ENCODE measurements at regions of chr7 and their contacts with region 1.

Region 1: DNA sequence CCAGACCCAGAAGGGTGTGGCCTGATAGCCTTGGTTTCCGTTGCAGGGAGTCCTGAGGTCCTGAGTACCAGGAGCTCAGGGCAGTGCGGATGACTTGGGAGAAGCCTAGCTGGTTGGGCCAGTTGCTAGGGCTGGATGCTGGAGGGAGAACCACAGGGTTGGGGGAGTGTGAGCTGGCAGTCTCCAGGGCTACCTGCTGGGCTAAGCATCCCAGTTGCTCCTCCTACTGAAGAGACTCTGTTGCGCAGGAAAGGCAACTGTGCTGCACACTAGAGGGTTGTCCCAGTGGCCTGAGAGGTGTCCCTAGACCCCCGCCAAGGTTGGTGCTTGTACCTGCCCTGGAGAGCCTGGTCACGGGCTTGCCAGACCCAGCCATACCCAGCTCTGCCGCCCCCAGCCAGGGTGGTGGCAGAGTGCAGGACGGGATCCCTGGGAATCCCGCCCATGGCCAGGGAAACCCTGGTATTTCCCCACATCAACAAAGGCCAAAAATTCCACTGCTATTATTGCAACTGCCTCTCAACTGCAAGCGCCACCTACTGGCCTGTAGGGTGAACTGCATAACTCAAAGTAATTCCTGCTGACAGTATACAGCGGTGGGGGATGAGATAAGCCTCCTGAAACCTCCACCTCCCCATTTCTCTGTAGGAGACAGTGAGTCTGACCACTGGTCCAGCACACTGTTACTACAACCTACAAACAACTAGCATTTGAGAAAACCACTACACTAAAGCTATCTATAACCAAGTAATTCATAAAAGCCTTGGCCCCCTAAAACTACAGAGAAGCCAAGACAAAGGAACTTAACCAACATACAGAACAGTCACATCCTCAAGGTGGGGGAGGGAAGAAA is 67.6 kb upstream of the DDC start:
- DNase-seq: no peak
- H3K4me3 ChIP-seq: no peak overlapping the region
- H3K27me3 ChIP-seq: no peaks in the 10 kb centered on the region
- CTCF ChIP-seq: peak; percentile 89

Region 2: GRCh38 chr7:50614721-50615518 is 17.9 kb before region 1 on chr7:
- CTCF ChIA-PET with region 1: interaction called, 27 read pairs
- POLR2A ChIA-PET with region 1: no interaction called
- DNase-seq: no peak
- H3K4me3 ChIP-seq: no peak overlapping the region
- H3K27me3 ChIP-seq: no peaks in the 10 kb centered on the region
- CTCF ChIP-seq: 0 out of 2 replicates have a peak, but pooled peaks have one; percentile 17

Region 3: GRCh38 chr7:50620433-50620832 is 12.4 kb before region 1 on chr7:
- CTCF ChIA-PET with region 1: interaction called, 27 read pairs
- POLR2A ChIA-PET with region 1: no interaction called
- DNase-seq: no peak
- H3K4me3 ChIP-seq: no peak overlapping the region
- H3K27me3 ChIP-seq: no peaks in the 10 kb centered on the region
- CTCF ChIP-seq: no peak

Region 4: DNA sequence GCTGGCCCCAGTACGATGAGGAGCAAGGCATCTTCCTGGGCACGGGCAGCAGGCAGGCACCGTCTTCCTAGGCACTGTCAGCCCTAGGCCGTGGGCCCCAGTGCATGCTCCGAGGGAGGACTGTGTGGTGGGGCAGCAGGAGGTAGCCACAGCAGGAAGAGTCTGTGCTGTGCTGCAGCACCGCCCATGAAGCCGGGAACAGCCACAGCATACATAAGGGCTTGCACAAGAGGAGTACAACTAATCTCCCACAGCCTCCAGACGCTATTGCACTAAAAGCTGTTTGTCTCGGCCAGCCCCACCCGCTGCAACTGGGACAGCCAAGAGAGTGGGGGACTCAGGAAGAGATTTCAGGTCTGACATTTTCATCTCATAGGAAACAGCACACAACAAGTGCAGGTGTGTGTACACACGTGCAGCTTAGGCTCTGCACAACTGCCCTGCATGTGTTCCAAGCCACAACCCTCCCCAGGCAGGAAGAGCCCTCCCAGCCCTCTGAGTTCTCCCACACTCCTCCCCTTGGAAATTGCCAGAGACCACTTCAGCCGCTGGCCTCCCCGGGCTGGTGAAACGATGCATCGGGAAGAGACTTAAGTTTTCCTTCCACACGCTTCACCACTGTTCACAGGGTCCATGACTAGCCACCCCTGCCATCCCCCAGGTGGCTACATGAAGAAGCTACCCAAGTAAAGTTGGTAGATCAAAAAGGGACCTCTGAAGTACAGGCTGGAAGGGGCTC is 20.5 kb after region 1 on chr7:
- CTCF ChIA-PET with region 1: interaction called, 12 read pairs
- POLR2A ChIA-PET with region 1: no interaction called
- DNase-seq: no peak
- H3K4me3 ChIP-seq: no peak overlapping the region
- H3K27me3 ChIP-seq: no peaks in the 10 kb centered on the region
- CTCF ChIP-seq: no peak